SK-N-SH (cell line): ENCODE measurements at regions of chr14 and their contacts with region 1.

Region 1: DNA sequence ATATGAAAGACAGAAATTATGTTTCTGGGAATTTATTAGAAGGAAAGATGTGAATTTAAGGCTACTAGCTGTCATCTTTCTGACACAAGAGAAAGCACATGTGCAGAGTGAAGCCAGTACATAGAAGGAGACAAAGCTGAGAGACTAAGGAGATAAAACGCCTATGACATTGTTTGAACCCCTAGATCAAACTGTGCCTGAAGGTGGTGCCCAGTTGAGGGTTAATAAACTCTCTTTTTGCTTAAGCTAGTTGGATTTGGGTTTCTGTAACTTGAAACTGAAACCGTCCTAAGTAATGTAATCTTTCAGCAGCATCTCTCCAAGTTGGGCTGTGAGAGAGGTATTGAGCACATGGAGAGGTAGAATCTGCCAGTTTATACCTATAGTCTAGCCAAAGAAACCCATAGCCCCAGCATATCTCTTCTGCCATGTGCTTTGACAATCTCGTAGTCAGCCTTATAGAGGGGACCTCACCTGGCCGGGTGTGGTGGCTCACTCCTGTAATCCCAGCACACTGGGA is 84.2 kb downstream of the LRRC74A start:
- DNase-seq: no peak
- H3K4me3 ChIP-seq: no peak overlapping the region
- H3K27ac ChIP-seq: no peak overlapping the region
- H3K4me1 ChIP-seq: peaks cover 13 to 17% of the 10 kb centered on the region in 2 experiments; a peak in 3 of 4 replicates
- H3K27me3 ChIP-seq: no peaks in the 10 kb centered on the region
- CTCF ChIP-seq: no peak
- EP300 ChIP-seq: no peak
- RAD21 ChIP-seq: no peak

Region 2: DNA sequence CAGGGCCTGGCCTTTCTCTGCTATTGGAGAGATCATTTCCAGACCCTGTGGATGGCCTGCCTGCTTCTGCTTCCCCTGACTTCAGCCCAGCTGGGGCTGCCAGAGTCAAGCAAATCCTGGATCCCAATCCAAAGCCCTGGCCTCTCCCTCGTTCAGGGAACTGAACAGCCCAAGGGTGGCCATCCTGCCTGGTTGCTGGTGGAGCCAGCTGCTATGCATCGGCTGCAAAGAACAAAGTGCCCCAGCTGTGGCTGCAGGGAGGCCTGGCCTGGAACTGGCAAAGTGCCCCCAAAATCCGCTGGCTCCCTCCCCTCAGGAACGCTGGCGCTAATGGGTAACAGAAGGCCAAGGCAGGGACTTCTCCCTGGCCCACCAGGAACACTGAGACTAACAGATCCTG is 27.8 kb before region 1 on chr14:
- CTCF ChIA-PET with region 1: interaction called, 102 read pairs
- POLR2A ChIA-PET with region 1: no interaction called
- DNase-seq: peak; percentile 59
- H3K4me3 ChIP-seq: no peak overlapping the region
- H3K27ac ChIP-seq: peak overlapping the region in 1 of 2 experiments; percentile 72; a peak in 1 of 4 replicates
- H3K4me1 ChIP-seq: peaks cover 0 to 24% of the 10 kb centered on the region in 2 experiments; a peak in 1 of 4 replicates
- H3K27me3 ChIP-seq: no peaks in the 10 kb centered on the region
- CTCF ChIP-seq: no peak
- EP300 ChIP-seq: no peak
- RAD21 ChIP-seq: peak; percentile 48

Region 3: GRCh38 chr14:76937181-76938091 is 27.0 kb after region 1 on chr14:
- CTCF ChIA-PET with region 1: interaction called, 52 read pairs
- POLR2A ChIA-PET with region 1: no interaction called
- DNase-seq: peak; percentile 93
- H3K4me3 ChIP-seq: no peak overlapping the region
- H3K27ac ChIP-seq: peak overlapping the region; percentile 89 to 97
- H3K4me1 ChIP-seq: peaks cover 23 to 50% of the 10 kb centered on the region in 2 experiments
- H3K27me3 ChIP-seq: no peaks in the 10 kb centered on the region
- CTCF ChIP-seq: no peak
- EP300 ChIP-seq: no peak; a peak in 1 of 4 replicates
- RAD21 ChIP-seq: peak; percentile 35

Region 4: DNA sequence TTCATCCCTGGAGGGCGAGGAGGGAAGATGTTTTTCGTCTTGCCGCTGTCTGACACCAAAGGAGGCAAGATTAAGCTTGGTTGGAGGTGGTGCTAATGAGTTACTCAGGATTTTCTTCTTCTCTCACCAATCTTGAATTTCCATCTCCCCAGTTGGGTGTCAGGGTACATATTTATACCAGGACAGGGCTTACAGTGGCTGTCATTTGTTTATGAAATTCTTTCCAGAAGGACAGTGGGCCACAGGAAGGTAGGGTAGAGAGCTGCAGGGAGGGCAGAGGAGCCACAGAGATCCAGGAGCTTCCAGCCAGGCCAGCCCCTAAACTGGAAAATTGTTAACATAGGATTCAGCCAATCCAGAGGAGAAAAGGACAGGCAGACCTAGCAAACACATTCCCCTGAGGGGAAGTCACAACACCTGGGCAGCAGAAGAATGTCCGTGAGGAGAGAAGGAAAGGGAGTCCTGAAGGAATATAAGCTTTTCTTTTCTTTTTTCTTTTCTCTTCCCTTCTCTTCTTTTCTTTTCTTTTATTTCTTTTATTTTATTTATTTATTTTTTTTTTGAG is 77.6 kb after region 1 on chr14:
- CTCF ChIA-PET with region 1: interaction called, 11 read pairs
- POLR2A ChIA-PET with region 1: no interaction called
- DNase-seq: no peak
- H3K4me3 ChIP-seq: no peak overlapping the region
- H3K27ac ChIP-seq: peak overlapping the region in 1 of 2 experiments; percentile 14; a peak in 1 of 4 replicates
- H3K4me1 ChIP-seq: peaks cover 11 to 33% of the 10 kb centered on the region in 2 experiments; a peak in 3 of 4 replicates
- H3K27me3 ChIP-seq: no peaks in the 10 kb centered on the region
- CTCF ChIP-seq: no peak
- EP300 ChIP-seq: no peak
- RAD21 ChIP-seq: no peak